OCI-LY7 (cell line): ENCODE measurements at regions of chr2 and their contacts with region 1.

Region 1: DNA sequence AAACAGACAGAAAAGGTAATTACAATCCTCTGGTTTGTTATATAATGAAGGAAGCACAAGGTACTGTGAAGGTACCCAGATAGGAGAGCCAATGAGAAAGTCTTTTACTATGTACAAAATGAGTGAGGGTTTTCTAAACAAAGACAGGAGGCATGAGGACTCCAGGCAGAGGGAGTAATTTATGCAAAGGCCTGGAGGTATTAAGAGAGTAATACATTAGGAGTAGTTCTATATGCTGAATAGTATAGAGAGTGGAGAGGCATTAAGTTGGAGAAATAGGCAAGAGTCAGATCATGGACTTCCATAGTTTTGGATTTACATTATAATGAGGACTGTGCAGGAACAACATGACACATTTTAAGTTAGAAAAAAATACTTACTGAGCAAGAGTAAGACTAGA is 216.0 kb downstream of the SCG2 start:
- DNase-seq: no peak
- H3K4me3 ChIP-seq: no peak overlapping the region
- H3K27ac ChIP-seq: no peak overlapping the region
- H3K4me1 ChIP-seq: no peaks in the 10 kb centered on the region
- CTCF ChIP-seq: no peak

Region 2: DNA sequence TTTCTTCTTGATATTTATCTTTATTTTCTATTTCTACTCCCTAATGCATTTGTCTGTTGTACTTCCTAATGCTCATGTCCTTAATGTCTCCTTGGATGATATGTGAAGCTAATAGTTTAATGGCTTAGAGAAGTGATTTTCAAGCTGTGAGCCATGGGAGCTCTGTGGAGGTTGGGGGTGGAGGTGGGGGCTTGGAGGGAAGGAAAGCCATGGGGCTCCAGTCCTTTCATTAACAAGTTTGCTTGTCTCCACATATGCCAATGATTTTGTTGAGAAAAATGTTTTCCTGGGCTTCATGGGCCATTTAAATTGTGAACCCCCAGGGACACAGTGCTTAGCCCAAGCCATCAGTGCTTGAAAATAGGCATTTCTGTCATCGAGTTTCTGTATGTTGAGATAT is 48.2 kb before region 1 on chr2:
- CTCF ChIA-PET with region 1: interaction called, 14 read pairs
- POLR2A ChIA-PET with region 1: no interaction called
- intact Hi-C with region 1: no loop called
- DNase-seq: no peak
- H3K4me3 ChIP-seq: no peak overlapping the region
- H3K27ac ChIP-seq: no peak overlapping the region
- H3K4me1 ChIP-seq: no peaks in the 10 kb centered on the region
- CTCF ChIP-seq: no peak